Breast epithelium (tissue), 4 donors: ENCODE measurements at regions of chr14 and their contacts with region 1.

Region 1: DNA sequence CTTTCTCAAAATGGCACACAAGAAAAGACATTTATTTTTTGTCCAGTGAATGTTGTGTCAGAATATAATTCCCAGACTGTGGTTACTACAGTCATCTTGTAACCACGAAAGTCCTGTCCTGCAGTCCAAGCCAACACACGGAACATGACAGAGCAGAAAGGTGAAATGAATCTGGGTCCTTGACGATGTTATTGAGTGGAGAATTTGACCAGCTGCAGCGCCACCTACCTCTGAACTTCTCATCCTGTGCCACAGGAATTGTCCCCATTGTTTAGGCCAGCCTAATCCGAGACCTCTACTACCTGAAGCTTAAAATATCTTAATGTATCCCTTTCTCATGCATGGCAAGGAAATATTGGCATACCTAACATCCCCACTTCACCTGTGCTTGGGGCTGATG is 64.1 kb upstream of the OTX2 start:
- DNase-seq: no peak
- H3K4me3 ChIP-seq: no peak overlapping the region
- H3K27ac ChIP-seq: no peak overlapping the region
- H3K4me1 ChIP-seq: no peaks in the 10 kb centered on the region
- H3K27me3 ChIP-seq: no peaks in the 10 kb centered on the region
- CTCF ChIP-seq: no peak
- POLR2A ChIP-seq: no peak

Region 2: GRCh38 chr14:56703947-56704346 is 170.4 kb before region 1 on chr14:
- intact Hi-C with region 1: no loop called
- DNase-seq: no peak
- H3K4me3 ChIP-seq: no peak overlapping the region
- H3K27ac ChIP-seq: no peak overlapping the region
- H3K4me1 ChIP-seq: no peaks in the 10 kb centered on the region
- H3K27me3 ChIP-seq: peaks cover 0 to 7% of the 10 kb centered on the region in 2 donors
- CTCF ChIP-seq: no peak
- POLR2A ChIP-seq: no peak

Region 3: GRCh38 chr14:56855891-56856461 is 18.4 kb before region 1 on chr14:
- intact Hi-C with region 1: no loop called
- DNase-seq: no peak
- H3K4me3 ChIP-seq: no peak overlapping the region
- H3K27ac ChIP-seq: no peak overlapping the region
- H3K4me1 ChIP-seq: no peaks in the 10 kb centered on the region
- H3K27me3 ChIP-seq: peaks cover 0 to 4% of the 10 kb centered on the region in 2 donors
- CTCF ChIP-seq: no peak
- POLR2A ChIP-seq: no peak

Region 4: DNA sequence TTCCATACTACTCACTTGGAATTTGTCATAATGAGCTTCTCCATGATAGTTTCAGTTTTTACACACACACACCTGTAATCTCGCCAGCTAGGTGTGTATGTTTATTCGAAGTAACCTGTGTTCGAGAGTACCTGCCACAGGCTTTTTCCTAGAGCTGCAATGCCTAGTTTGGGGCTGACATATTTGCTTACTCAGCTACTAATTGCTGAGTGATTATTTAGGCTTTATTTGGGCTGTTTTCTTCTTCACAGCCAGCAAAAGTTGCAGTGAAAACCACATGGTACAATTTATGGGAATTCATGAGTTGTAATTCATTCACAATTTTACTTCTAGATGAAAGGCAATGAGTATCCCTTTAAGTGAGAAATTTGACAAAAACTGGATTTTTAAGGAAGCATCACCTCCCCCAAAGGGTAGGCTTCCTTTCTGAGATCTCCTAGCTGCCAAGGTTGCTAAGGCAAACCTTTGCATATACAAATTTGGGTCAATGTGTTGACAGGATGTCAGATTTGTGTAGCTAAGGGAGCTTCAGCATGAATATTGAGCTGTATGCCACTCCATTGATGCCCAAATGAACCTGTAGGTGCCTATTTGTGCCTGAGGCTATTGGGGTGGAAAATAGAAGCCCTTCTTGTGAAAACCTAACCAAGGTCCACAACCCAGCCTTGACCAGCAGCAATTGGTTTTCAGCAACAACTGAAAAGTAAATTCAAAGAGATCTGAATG is 44.6 kb after region 1 on chr14:
- intact Hi-C with region 1: no loop called
- DNase-seq: no peak
- H3K4me3 ChIP-seq: no peak overlapping the region
- H3K27ac ChIP-seq: no peak overlapping the region
- H3K4me1 ChIP-seq: no peaks in the 10 kb centered on the region
- H3K27me3 ChIP-seq: no peaks in the 10 kb centered on the region
- CTCF ChIP-seq: no peak
- POLR2A ChIP-seq: no peak

Region 5: DNA sequence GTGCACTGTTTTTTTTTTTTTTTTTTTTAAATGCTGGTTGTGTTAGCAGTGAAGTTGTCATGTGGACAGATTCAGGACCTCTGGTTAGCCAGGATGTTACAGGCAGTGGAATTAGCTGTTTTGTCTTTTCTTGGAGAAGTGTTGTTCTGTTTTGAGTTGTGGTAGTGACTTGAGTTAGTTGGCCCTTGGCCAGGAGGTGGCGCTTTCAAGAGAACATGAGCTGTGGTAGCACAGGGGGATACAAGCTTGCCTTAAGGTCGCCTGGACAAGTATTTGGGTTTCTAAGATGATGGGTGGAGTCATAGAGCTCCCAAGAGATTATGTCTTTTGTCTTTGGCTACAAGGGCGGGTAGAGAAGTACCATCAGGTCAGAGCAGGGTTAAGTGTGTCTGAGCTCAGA is 652.6 kb after region 1 on chr14:
- intact Hi-C with region 1: loop called (anchors 5 kb)
- DNase-seq: no peak
- H3K4me3 ChIP-seq: no peak overlapping the region
- H3K27ac ChIP-seq: no peak overlapping the region
- H3K4me1 ChIP-seq: no peaks in the 10 kb centered on the region
- H3K27me3 ChIP-seq: no peaks in the 10 kb centered on the region
- CTCF ChIP-seq: no peak
- POLR2A ChIP-seq: no peak